ENCODE measurements at regions of chr1 and their contacts with region 1.

Region 1: GRCh38 chr1:206797534-206798383 is 25.5 kb upstream of the IL10 start:
- DNase-seq: peak; percentile 25 to 69
- H3K4me3 ChIP-seq: no peak overlapping the region
- H3K27ac ChIP-seq: no peak overlapping the region
- H3K4me1 ChIP-seq: no peaks in the 10 kb centered on the region
- H3K27me3 ChIP-seq: no peaks in the 10 kb centered on the region
- CTCF ChIP-seq: peak; percentile 71 to 98 (median 91)
- EP300 ChIP-seq: no peak
- POLR2A ChIP-seq: no peak
- RAD21 ChIP-seq: peak; percentile 49 to 64

Region 2: DNA sequence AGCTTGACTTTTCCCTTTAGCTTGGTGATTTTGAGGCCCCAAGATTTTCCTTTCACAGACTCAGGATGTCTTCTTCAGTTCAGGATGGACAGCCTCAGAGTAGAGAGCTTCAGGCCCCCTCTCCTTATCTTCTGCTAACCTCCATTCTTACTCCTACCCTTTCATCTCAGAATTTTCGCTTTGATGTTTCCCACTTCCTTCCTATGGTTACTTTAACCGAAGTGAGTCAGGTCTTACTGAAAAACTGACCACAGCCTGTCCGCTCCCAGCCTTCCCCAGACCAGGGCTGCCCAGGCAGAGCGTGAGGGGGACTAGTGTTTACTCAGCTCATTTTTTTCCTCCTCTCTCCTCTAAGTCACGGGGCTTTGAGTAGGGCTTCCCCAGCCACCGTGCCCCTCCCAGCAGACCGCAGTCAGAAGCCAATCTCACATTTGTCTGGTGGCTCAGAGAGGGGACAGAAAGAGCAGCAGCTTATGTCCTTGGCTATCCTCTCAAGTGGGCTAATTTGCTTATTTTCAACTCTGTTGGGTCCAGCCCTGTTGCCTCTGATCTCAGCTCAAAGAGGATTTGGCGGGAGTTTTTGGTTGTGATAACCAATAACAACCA is 31.4 kb before region 1 on chr1:
- CTCF ChIA-PET with region 1: interaction called, 23 read pairs
- POLR2A ChIA-PET with region 1: no interaction called
- DNase-seq: no peak
- H3K4me3 ChIP-seq: no peak overlapping the region
- H3K27ac ChIP-seq: no peak overlapping the region
- H3K4me1 ChIP-seq: no peaks in the 10 kb centered on the region; a peak in 1 of 7 replicates
- H3K27me3 ChIP-seq: peaks cover 0 to 2% (median 0%) of the 10 kb centered on the region in 4 experiments; a peak in 1 of 7 replicates
- CTCF ChIP-seq: no peak
- EP300 ChIP-seq: no peak
- POLR2A ChIP-seq: no peak
- RAD21 ChIP-seq: no peak

Region 3: GRCh38 chr1:206776229-206776628 is 21.5 kb before region 1 on chr1:
- CTCF ChIA-PET with region 1: interaction called, 23 read pairs
- POLR2A ChIA-PET with region 1: no interaction called
- DNase-seq: no peak
- H3K4me3 ChIP-seq: no peak overlapping the region
- H3K27ac ChIP-seq: no peak overlapping the region
- H3K4me1 ChIP-seq: no peaks in the 10 kb centered on the region
- H3K27me3 ChIP-seq: no peaks in the 10 kb centered on the region
- CTCF ChIP-seq: no peak
- EP300 ChIP-seq: no peak
- POLR2A ChIP-seq: no peak
- RAD21 ChIP-seq: no peak

Region 4: DNA sequence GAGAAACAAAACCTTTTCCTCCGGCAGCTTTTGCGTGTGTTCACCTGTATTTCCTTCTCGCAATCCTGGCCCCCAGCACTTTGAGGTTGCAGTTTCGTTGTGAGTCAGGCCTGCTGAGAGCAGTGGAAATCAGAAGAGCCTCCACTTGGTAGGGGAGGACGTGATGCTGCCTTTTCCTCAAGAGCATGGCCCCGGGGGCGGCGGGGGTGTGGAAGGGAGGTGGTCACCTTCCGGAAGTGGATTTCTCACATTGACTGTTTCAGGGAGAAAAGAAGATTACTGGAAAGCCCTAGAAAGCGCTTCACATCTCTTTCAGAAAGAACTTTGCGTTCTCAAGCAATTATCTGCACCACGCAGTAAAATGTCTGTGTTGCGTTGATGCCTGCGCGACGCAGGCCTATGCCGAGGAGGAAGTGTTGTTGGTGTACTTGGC is 13.3 kb before region 1 on chr1:
- CTCF ChIA-PET with region 1: interaction called, 43 read pairs
- POLR2A ChIA-PET with region 1: no interaction called
- DNase-seq: no peak
- H3K4me3 ChIP-seq: no peak overlapping the region
- H3K27ac ChIP-seq: no peak overlapping the region
- H3K4me1 ChIP-seq: no peaks in the 10 kb centered on the region; a peak in 1 of 7 replicates
- H3K27me3 ChIP-seq: peaks cover 0 to 2% (median 0%) of the 10 kb centered on the region in 4 experiments; a peak in 2 of 7 replicates
- CTCF ChIP-seq: no peak
- EP300 ChIP-seq: no peak
- POLR2A ChIP-seq: no peak
- RAD21 ChIP-seq: no peak

Region 5: GRCh38 chr1:206808615-206809014 is 10.9 kb after region 1 on chr1:
- CTCF ChIA-PET with region 1: interaction called, 28 read pairs
- POLR2A ChIA-PET with region 1: no interaction called
- DNase-seq: no peak
- H3K4me3 ChIP-seq: no peak overlapping the region
- H3K27ac ChIP-seq: no peak overlapping the region
- H3K4me1 ChIP-seq: no peaks in the 10 kb centered on the region
- H3K27me3 ChIP-seq: no peaks in the 10 kb centered on the region
- CTCF ChIP-seq: peak; percentile 6 to 53 (median 44)
- EP300 ChIP-seq: no peak
- POLR2A ChIP-seq: no peak
- RAD21 ChIP-seq: peak; percentile 62 to 73

Region 6: DNA sequence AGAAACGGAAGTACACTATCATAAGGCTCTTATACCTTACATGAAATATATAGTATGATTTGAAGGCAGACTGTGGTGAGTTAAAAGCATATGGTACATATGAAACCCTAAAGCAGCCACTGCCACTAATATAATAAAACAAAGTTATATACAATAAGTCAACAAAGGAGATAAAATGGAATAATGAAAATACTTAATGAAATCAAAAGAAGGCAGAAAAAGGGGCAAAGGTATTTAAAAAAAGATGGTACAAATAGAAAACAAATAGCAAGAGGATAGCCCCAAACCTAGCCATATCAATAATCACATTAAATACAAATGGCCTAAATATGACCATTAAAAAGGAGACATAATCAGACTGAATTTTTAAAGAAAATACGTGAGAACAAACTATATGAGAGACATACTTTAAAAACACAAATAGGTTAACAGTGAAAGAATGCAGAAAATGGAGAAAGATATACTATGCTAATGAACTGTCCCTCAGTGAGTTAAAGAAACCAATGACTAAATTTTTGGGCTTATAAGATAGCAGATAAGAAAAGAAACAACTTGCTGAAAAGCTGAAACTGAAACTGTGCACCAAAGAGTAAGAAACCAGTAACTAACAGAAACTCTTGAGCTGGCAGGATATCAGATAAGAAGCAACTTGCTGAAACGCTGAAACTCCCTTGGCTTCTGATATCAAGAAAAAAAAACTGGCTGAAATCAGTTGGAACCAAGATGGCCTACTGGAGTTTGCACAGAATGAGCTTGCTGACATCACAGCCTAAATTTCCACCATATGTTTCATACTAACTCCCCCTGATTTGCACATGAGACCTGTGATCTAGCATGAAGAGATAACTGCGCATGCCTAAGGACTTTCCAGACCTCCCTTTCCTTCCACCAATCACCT is 18.9 kb after region 1 on chr1:
- CTCF ChIA-PET with region 1: interaction called, 28 read pairs
- POLR2A ChIA-PET with region 1: no interaction called
- DNase-seq: no peak
- H3K4me3 ChIP-seq: no peak overlapping the region
- H3K27ac ChIP-seq: no peak overlapping the region
- H3K4me1 ChIP-seq: peaks cover 0 to 7% (median under 1%) of the 10 kb centered on the region in 4 experiments; a peak in 1 of 7 replicates
- H3K27me3 ChIP-seq: no peaks in the 10 kb centered on the region
- CTCF ChIP-seq: no peak
- EP300 ChIP-seq: no peak
- POLR2A ChIP-seq: no peak
- RAD21 ChIP-seq: no peak

Region 7: GRCh38 chr1:206905280-206906164 is 107.8 kb after region 1 on chr1:
- CTCF ChIA-PET with region 1: interaction called, 11 read pairs
- POLR2A ChIA-PET with region 1: no interaction called
- DNase-seq: no peak
- H3K4me3 ChIP-seq: no peak overlapping the region
- H3K27ac ChIP-seq: no peak overlapping the region
- H3K4me1 ChIP-seq: peaks cover 0 to 7% (median 3%) of the 10 kb centered on the region in 4 experiments; a peak in 4 of 7 replicates
- H3K27me3 ChIP-seq: peaks cover 9 to 31% (median 27%) of the 10 kb centered on the region in 4 experiments
- CTCF ChIP-seq: no peak
- EP300 ChIP-seq: no peak
- POLR2A ChIP-seq: no peak
- RAD21 ChIP-seq: no peak

Measured in H1 (cell line).